Activated CD4-positive, alpha-beta T cell treated with anti-CD3 and anti-CD28 coated beads, Interleukin-2, amount 10 ng/mL, durations not matched to agents 24 days and 14 days (primary cell): ENCODE measurements at regions of chr6 and their contacts with region 1.

Region 1: GRCh38 chr6:73695619-73696421 is at the start of gene CD109:
- DNase-seq: peak; percentile 90
- H3K4me3 Mint-ChIP-seq: peak within 1 kb of the TSS; percentile 90
- H3K27ac Mint-ChIP-seq: peak within 1 kb of the TSS; percentile 98
- H3K4me1 Mint-ChIP-seq: peaks cover 46% of the 10 kb centered on the region
- H3K27me3 Mint-ChIP-seq: no peaks in the 10 kb centered on the region
- total RNA-seq, gene CD109: 23.6 and 24.2 TPM in 2 replicates

Region 2: DNA sequence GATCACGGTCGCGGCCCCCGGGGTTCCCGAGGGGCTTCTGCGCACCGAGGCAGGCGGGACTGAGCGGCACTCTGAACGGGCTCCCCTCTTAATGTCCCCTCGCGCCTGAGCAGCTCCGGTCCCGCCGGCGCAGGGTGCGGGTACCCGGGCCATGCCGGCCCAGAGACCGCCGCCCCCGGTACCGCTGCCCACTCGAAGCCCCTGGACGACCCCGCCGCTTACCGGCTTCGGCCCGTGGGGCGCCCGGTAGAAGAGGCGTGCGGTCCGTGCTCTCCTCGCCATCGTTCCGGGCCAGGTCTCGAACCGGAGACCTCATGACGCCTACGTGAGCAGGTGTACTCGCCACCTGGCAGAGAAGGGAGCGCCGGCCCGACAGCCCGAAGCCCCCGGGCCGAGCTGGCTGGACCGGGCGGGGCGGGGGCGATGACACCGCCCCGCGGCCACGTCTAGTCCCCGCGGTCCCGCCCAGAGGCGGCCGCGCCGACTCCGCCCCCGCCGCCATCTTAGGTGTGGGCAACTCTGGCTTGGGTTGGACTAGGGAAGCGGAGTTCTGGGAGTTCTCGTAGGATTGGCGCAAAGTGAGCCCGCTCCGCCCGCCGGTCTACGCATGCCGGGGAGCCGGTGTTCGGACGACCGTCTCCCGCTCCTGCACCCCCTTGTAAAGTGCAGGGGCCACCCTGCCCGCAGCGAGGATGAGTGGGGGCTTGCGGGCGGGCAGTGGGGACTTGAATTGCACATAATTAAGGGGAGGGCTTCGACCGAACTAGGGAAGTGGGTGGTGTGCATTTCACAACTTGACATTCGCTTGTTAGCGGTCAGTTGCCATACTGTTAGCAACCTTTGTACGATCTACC is 42.0 kb before region 1 on chr6 and contains the start of gene SLC17A5:
- intact Hi-C with region 1: loop called (anchors 1 kb)
- DNase-seq: peak; percentile 96
- H3K4me3 Mint-ChIP-seq: peak within 1 kb of the TSS; percentile 96
- H3K27ac Mint-ChIP-seq: peak within 1 kb of the TSS; percentile 97
- H3K4me1 Mint-ChIP-seq: peaks cover 25% of the 10 kb centered on the region
- H3K27me3 Mint-ChIP-seq: no peaks in the 10 kb centered on the region
- total RNA-seq, gene SLC17A5: 4.9 TPM in 2 replicates

Region 3: DNA sequence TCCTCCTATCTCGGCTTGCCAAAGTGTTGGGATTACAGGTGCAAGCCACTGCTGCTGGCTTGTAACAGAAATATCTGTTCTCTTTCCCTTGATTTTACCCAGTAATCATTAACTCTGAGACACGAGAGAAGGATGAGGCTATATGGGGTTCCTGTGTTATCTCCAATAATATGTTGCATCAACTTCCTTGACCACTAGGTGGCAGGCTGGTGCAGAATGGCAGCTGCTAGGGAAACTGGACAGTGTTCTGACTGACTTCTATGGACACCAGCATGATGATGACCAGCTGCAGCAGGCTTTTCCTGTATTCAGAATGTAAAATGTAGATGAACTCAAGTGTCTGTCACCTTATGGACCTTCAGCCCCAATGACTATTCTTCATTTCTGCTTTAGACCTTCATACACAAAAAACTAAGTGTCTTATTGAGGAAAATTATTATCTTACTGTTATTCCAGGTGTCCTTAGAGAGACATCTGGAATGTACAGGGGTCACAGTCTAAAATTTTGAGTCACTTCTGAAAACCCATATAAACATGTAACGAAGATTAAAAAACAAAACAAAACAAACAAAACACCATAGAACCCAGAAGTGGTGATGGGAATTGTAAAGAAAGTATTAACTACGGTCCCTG is 20.2 kb before region 1 on chr6:
- intact Hi-C with region 1: loop called (anchors 2 kb)
- DNase-seq: peak; percentile 93
- H3K4me3 Mint-ChIP-seq: no peak overlapping the region
- H3K27ac Mint-ChIP-seq: no peak overlapping the region
- H3K4me1 Mint-ChIP-seq: no peaks in the 10 kb centered on the region
- H3K27me3 Mint-ChIP-seq: peaks cover 18% of the 10 kb centered on the region

Region 4: DNA sequence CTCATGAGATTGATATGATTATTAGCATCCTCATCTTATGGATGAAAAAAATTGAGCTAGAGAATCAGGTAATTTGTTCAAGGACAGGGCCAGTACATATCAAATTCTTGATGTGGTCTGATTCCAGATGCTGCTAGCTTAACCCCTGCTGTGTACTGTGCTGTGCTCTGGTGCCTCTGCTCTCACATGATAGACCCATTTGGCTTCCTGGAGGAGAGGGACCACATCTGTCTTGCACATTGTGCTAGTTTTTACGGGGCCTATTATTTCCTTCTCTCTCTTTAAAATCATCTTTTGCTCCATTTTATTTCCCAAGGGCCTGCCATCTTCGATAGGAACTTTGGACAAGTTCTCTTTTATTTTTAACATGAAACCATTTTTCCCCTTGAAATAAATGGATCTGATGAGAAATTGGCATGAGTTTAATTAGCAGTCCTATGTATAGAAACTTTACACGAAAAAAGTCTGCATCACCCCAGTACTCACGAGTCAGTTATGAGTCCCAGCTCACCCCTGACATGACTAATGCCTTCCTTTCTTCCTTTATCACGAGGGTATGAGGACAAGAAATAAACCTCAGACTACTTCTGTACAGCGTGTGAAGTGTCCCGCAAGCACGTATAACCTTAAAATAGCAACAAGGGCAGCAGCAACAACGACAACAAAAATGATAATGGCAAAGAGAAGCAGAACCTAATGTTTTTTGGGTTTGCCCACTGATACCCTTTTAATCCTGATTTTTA is 26.7 kb after region 1 on chr6:
- intact Hi-C with region 1: loop called (anchors 1 kb)
- DNase-seq: peak; percentile 75
- H3K4me3 Mint-ChIP-seq: peak overlapping the region; percentile 68
- H3K27ac Mint-ChIP-seq: peak overlapping the region; percentile 87
- H3K4me1 Mint-ChIP-seq: peaks cover 39% of the 10 kb centered on the region
- H3K27me3 Mint-ChIP-seq: no peaks in the 10 kb centered on the region

Region 5: DNA sequence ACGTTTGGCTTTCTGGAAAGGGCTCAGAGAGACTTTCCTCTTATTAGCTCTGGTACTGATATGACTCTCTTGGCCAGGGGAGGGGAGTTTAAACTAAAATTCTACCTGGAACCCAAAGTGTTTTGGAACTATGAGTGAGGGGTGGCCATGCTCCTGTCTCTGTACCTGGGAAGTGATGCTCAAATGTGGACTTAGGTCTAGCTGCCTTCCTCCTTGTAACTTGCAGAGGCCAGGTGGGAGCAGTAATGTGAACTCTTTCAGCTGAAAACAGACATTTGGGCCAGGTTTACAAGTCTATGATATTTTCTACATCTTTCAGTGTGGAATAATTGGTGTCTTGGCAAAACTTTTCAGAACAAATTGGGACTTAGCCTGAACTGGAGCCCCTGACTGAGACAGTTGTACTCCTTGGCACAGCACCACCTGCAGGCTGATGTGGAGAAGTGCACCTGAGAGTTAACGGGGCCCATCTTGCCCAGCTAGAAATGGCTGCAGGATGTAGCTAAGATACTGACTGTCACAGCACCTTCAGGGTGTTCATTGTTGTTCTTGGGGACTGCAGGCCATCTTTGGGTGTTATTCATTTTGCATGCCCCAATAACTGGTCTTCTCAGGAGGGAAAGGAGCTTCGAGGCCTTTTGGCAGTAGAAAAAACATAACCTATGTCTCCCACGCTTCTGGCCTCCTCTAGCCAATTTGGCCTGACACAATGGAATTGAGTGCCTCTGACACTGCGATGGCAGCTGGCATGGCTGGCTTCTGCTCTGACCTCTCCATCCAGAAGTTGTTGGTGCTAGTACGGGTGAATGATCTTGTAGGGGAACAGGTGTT is 37.2 kb after region 1 on chr6:
- intact Hi-C with region 1: loop called (anchors 1 kb)
- DNase-seq: peak; percentile 93
- H3K4me3 Mint-ChIP-seq: no peak overlapping the region
- H3K27ac Mint-ChIP-seq: no peak overlapping the region
- H3K4me1 Mint-ChIP-seq: peaks cover 31% of the 10 kb centered on the region
- H3K27me3 Mint-ChIP-seq: no peaks in the 10 kb centered on the region

Region 6: GRCh38 chr6:74100719-74101287 is 405.0 kb after region 1 on chr6:
- intact Hi-C with region 1: no loop called
- DNase-seq: no peak
- H3K4me3 Mint-ChIP-seq: no peak overlapping the region
- H3K27ac Mint-ChIP-seq: no peak overlapping the region
- H3K4me1 Mint-ChIP-seq: no peaks in the 10 kb centered on the region
- H3K27me3 Mint-ChIP-seq: no peaks in the 10 kb centered on the region